H1 (cell line): ENCODE measurements at regions of chr13 and their contacts with region 1.

Region 1: DNA sequence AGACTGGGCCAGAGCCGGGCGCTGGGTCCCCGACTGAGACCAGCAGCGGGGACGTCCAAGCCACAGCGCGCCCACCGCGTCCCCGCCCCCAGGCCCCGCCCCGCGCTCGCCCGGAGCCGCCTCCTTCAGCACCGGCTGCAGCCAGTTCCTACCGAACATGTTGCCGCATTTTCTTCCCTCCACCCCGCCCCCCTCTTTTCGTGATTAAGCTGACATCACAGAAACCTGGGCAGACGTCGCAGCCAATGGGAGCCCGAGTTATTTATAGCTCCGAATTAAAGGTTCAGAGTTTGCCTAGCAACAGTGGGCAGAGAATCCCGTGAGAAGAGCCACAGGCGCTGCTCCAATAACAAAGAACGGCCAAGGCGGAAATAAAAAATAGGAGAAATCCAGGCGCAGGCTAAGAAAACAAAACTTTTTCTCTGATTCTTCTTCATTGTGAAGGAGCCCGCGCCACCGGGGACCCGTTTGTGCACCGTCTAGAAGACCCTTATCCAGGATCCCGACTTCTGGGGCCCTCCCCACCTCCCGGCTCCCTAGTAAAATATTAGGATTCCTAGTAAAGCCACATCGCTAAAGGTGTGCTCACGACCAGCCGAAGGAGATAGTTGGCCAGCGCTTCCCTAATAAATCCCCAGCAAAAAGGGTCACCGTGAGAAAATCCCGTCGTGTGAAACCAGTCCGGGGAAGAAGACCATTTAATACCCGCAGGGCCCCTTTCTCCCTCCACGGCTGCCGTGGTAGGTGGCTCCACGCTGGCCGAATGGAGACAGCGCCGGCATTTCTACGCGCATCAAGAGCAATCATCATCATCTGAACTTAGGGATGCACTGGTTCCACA is 61.7 kb downstream of the SERP2 start:
- DNase-seq: peak; percentile 90 to 98
- H3K4me3 ChIP-seq: peak overlapping the region; percentile 83 to 97 (median 90)
- H3K27ac ChIP-seq: peak overlapping the region; percentile 98
- H3K4me1 ChIP-seq: peaks cover 0 to 8% (median 5%) of the 10 kb centered on the region in 4 experiments; a peak in 5 of 7 replicates
- H3K27me3 ChIP-seq: no peaks in the 10 kb centered on the region
- CTCF ChIP-seq: no peak
- EP300 ChIP-seq: peak in 1 of 2 experiments; percentile 88; a peak in 1 of 3 replicates
- POLR2A ChIP-seq: peak; percentile 78 to 93
- RAD21 ChIP-seq: 0 out of 4 replicates have a peak, but pooled peaks of 1 of the 2 experiments have one; percentile 11

Region 2: GRCh38 chr13:43908156-43909131 is 526.9 kb before region 1 on chr13:
- CTCF ChIA-PET with region 1: interaction called, 16 read pairs
- POLR2A ChIA-PET with region 1: interaction called, 9 read pairs
- DNase-seq: no peak
- H3K4me3 ChIP-seq: no peak overlapping the region
- H3K27ac ChIP-seq: no peak overlapping the region
- H3K4me1 ChIP-seq: no peaks in the 10 kb centered on the region
- H3K27me3 ChIP-seq: no peaks in the 10 kb centered on the region
- CTCF ChIP-seq: peak in 2 of 3 experiments; percentile 15 to 29; a peak in 2 of 4 replicates
- EP300 ChIP-seq: no peak
- POLR2A ChIP-seq: no peak
- RAD21 ChIP-seq: peak; percentile 42 to 62

Region 3: GRCh38 chr13:44191504-44192171 is 243.7 kb before region 1 on chr13:
- CTCF ChIA-PET with region 1: interaction called, 14 read pairs
- POLR2A ChIA-PET with region 1: interaction called, 12 read pairs
- DNase-seq: no peak
- H3K4me3 ChIP-seq: no peak overlapping the region
- H3K27ac ChIP-seq: no peak overlapping the region
- H3K4me1 ChIP-seq: no peaks in the 10 kb centered on the region
- H3K27me3 ChIP-seq: no peaks in the 10 kb centered on the region
- CTCF ChIP-seq: peak; percentile 35 to 82 (median 59)
- EP300 ChIP-seq: no peak
- POLR2A ChIP-seq: no peak
- RAD21 ChIP-seq: peak; percentile 61 to 79

Region 4: DNA sequence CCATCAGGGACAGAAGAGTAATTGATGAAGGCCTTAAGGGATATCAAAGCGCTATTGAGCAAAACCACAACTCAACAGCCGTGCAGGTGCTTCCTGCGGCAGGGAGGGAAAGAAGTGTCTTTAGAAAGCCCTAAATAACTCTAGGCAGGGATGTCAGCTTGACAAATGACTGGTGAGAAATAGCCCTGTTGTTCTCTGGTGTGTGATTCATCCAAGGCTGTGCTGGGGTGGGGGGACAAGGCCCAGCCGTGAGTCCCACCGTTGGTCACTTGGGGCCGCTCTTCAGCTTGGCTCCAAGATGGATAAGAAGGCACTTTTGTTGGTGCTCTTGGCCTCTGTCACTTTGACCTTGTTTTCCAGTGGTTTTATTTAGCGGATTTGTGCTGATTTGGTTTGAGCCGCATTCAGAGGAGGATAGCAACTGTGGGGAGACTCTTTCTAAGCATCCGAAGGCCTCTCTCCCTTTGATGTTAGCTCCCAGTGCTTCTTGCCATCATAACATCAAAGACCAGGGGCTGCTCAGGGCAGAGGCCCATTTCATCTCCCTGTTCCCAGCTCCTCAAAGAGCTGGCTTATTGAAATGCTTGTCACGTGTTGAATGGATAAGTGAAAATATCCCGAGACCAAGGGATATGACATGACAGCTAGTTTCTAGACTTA is 192.0 kb before region 1 on chr13:
- CTCF ChIA-PET with region 1: interaction called, 38 read pairs
- POLR2A ChIA-PET with region 1: interaction called, 31 read pairs
- DNase-seq: peak; percentile 60 to 64
- H3K4me3 ChIP-seq: no peak overlapping the region
- H3K27ac ChIP-seq: no peak overlapping the region
- H3K4me1 ChIP-seq: no peaks in the 10 kb centered on the region
- H3K27me3 ChIP-seq: no peaks in the 10 kb centered on the region
- CTCF ChIP-seq: peak; percentile 78 to 92 (median 78)
- EP300 ChIP-seq: no peak
- POLR2A ChIP-seq: no peak
- RAD21 ChIP-seq: peak; percentile 91 to 96

Region 5: GRCh38 chr13:44416297-44416696 is 19.1 kb before region 1 on chr13:
- CTCF ChIA-PET with region 1: interaction called, 6 read pairs
- POLR2A ChIA-PET with region 1: interaction called, 125 read pairs
- DNase-seq: no peak
- H3K4me3 ChIP-seq: no peak overlapping the region
- H3K27ac ChIP-seq: no peak overlapping the region
- H3K4me1 ChIP-seq: peaks cover 8 to 21% (median 12%) of the 10 kb centered on the region in 4 experiments
- H3K27me3 ChIP-seq: no peaks in the 10 kb centered on the region
- CTCF ChIP-seq: no peak
- EP300 ChIP-seq: no peak
- POLR2A ChIP-seq: no peak
- RAD21 ChIP-seq: no peak

Region 6: GRCh38 chr13:44449999-44450708 is 14.8 kb after region 1 on chr13:
- CTCF ChIA-PET with region 1: interaction called, 5 read pairs
- POLR2A ChIA-PET with region 1: interaction called, 21 read pairs
- DNase-seq: no peak
- H3K4me3 ChIP-seq: no peak overlapping the region
- H3K27ac ChIP-seq: no peak overlapping the region
- H3K4me1 ChIP-seq: 0 out of 7 replicates have a peak, but pooled peaks cover 0 to 3% (median 0%) of the 10 kb centered on the region in 4 experiments
- H3K27me3 ChIP-seq: no peaks in the 10 kb centered on the region
- CTCF ChIP-seq: no peak
- EP300 ChIP-seq: no peak
- POLR2A ChIP-seq: no peak
- RAD21 ChIP-seq: no peak